SK-N-SH (cell line): ENCODE measurements at regions of chr7 and their contacts with region 1.

Region 1: DNA sequence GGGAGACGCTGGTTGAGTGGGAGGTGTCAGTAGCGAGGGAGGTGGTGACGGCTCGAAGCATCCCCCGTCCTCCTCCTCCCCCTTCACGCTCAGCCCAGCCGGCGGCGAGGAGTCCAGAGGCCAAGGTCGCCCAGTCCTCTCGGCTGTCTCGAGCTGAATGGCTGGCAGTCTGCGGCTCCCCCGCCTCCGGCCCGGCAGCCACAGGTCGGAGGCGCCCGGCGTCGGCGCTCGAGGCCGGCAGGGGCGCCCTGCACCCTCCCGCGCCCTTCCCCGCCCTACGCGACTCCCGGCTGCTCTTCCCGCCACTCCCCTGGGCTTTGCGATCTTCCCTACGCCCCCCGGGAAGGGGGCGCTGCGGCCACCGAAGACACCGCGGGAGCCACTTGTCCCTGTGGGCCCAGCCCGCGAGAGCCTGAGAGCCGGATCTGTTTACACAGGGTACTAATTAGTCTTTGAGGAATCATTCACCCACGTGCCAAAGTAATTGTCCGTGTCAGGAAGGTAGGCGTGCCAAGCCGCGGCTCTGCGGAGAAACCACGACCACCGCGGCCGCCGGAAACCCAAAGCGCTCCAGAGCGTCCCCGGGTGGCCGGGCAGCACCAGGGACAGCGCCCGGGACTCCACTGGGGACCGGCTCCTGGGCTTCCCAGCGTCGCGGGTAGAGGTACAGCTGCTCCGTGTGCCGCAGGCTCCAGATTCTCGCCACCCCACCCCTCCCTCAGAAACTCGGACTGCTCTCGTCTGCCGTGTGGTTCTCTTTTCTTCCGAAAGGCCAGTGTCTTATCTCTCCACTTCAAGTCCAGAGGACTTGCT is at the start of gene NXPH1:
- DNase-seq: peak; percentile 97
- H3K4me3 ChIP-seq: peak within 1 kb of the TSS; percentile 7 to 41; a peak in 2 of 4 replicates
- H3K27ac ChIP-seq: no peak within 1 kb of the TSS
- H3K4me1 ChIP-seq: peaks cover 0 to 13% of the 10 kb centered on the region in 2 experiments; a peak in 1 of 4 replicates
- H3K27me3 ChIP-seq: 0 out of 2 replicates have a peak, but pooled peaks cover 5% of the 10 kb centered on the region
- CTCF ChIP-seq: 0 out of 2 replicates have a peak, but pooled peaks have one; percentile 10
- EP300 ChIP-seq: peak in 1 of 2 experiments; percentile 15; a peak in 1 of 4 replicates
- RAD21 ChIP-seq: peak; percentile 38; the same call in 1 of the 2 replicates
- polyA plus RNA-seq, gene NXPH1: not detected in 2 replicates

Region 2: GRCh38 chr7:8455426-8455825 is 21.7 kb after region 1 on chr7:
- CTCF ChIA-PET with region 1: interaction called, 11 read pairs
- POLR2A ChIA-PET with region 1: no interaction called
- DNase-seq: no peak
- H3K4me3 ChIP-seq: no peak overlapping the region
- H3K27ac ChIP-seq: no peak overlapping the region
- H3K4me1 ChIP-seq: no peaks in the 10 kb centered on the region
- H3K27me3 ChIP-seq: no peaks in the 10 kb centered on the region
- CTCF ChIP-seq: no peak
- EP300 ChIP-seq: no peak
- RAD21 ChIP-seq: no peak